Mammary epithelial cell (primary cell): ENCODE measurements at regions of chr6 and their contacts with region 1.

Region 1: DNA sequence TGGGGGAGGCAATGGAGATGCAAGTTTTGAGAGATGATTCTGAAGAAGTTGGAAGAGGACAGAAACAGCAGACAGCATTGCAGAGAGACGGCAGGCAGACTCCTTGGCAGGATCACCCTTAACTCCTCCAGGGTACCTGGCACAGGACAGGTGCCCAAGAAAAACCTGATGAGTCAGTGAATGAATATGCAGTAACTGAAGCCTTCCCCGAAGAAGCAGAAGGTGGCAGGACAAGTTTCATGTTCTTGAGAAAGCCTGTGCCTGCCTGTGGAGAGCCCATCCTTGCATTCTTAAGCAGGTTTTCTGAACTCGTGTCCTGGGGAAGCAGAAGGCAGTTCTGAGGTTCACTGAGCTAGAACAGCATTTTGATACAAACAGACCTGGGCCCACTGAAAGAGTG is 79.6 kb upstream of the SASH1 start:
- DNase-seq: peak; percentile 82
- H3K4me3 ChIP-seq: no peak overlapping the region
- H3K27ac ChIP-seq: peak overlapping the region; percentile 30
- H3K4me1 ChIP-seq: peaks cover 24% of the 10 kb centered on the region
- H3K27me3 ChIP-seq: no peaks in the 10 kb centered on the region
- CTCF ChIP-seq: no peak

Region 2: GRCh38 chr6:147434516-147434915 is 828.5 kb before region 1 on chr6:
- CTCF ChIA-PET with region 1: no interaction called
- dilution Hi-C with region 1: no loop called
- in situ Hi-C with region 1: no loop called
- intact Hi-C with region 1: no loop called
- DNase-seq: peak; percentile 74
- H3K4me3 ChIP-seq: no peak overlapping the region
- H3K27ac ChIP-seq: no peak overlapping the region
- H3K4me1 ChIP-seq: peaks cover 9% of the 10 kb centered on the region
- H3K27me3 ChIP-seq: no peaks in the 10 kb centered on the region
- CTCF ChIP-seq: no peak

Region 3: DNA sequence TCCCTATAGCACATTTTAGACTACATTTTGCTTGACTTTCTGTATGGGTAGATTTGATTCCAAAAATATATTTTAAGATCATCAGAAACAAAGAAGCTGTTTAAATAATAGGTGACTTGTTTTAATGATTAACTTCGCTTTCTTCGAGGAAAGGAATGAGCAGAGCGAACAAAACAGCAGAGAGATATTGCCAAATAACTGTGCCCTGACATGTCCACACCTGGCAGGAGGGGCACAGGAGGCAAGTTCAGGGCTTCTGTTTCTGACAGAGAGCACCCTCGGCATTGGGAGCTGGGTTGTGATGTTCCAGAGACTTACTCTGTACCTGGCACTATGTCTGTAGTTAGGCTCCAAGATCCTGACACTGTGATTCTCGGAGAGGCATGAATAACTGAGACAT is 76.1 kb before region 1 on chr6:
- CTCF ChIA-PET with region 1: no interaction called
- dilution Hi-C with region 1: no loop called
- in situ Hi-C with region 1: loop called in 1 of 2 experiments (anchors 5 kb)
- intact Hi-C with region 1: no loop called
- DNase-seq: peak; percentile 41
- H3K4me3 ChIP-seq: no peak overlapping the region
- H3K27ac ChIP-seq: no peak overlapping the region
- H3K4me1 ChIP-seq: peaks cover 28% of the 10 kb centered on the region
- H3K27me3 ChIP-seq: no peaks in the 10 kb centered on the region
- CTCF ChIP-seq: no peak

Region 4: GRCh38 chr6:148311966-148312669 is 49.1 kb after region 1 on chr6:
- CTCF ChIA-PET with region 1: no interaction called
- dilution Hi-C with region 1: loop called (anchors 5 kb)
- in situ Hi-C with region 1: no loop called
- intact Hi-C with region 1: no loop called
- DNase-seq: no peak
- H3K4me3 ChIP-seq: no peak overlapping the region
- H3K27ac ChIP-seq: no peak overlapping the region
- H3K4me1 ChIP-seq: no peaks in the 10 kb centered on the region
- H3K27me3 ChIP-seq: no peaks in the 10 kb centered on the region
- CTCF ChIP-seq: no peak

Region 5: GRCh38 chr6:148351309-148351708 is 88.3 kb after region 1 on chr6:
- CTCF ChIA-PET with region 1: interaction called, 12 read pairs
- dilution Hi-C with region 1: no loop called
- in situ Hi-C with region 1: no loop called
- intact Hi-C with region 1: no loop called
- DNase-seq: no peak
- H3K4me3 ChIP-seq: no peak overlapping the region
- H3K27ac ChIP-seq: no peak overlapping the region
- H3K4me1 ChIP-seq: peaks cover 4% of the 10 kb centered on the region
- H3K27me3 ChIP-seq: no peaks in the 10 kb centered on the region
- CTCF ChIP-seq: no peak

Region 6: GRCh38 chr6:148464319-148465010 is 201.5 kb after region 1 on chr6:
- CTCF ChIA-PET with region 1: interaction called, 4 read pairs
- dilution Hi-C with region 1: no loop called
- in situ Hi-C with region 1: loop called (anchors 10 to 25 kb)
- intact Hi-C with region 1: no loop called
- DNase-seq: peak; percentile 42
- H3K4me3 ChIP-seq: no peak overlapping the region
- H3K27ac ChIP-seq: no peak overlapping the region
- H3K4me1 ChIP-seq: no peaks in the 10 kb centered on the region
- H3K27me3 ChIP-seq: no peaks in the 10 kb centered on the region
- CTCF ChIP-seq: peak; percentile 85 to 97